ENCODE measurements at regions of chr5 and their contacts with region 1.

Region 1: DNA sequence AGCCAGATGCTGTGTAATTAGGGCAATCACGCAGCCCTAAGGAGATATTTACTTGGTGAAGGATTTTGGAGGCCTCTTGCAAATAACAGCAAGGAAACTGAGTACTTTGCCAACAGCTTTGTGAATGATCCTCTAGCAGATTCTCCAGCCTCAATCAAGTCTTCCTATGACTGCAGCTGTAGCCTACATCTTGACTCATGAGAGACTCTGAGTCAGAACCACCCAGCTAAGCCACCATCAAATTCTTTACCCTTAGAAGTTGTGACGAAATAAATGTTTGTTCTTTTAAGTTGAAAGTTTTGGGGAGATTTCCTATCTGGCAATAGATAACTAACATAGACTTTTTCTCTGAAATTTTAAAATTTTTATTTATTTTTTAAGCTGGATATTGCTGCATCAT is 237.6 kb upstream of the CCNH start:
- DNase-seq: no peak
- H3K4me3 ChIP-seq: no peak overlapping the region
- H3K27ac ChIP-seq: peak overlapping the region in 2 of 59 donors; percentile 20 to 29
- H3K27me3 ChIP-seq: no peaks in the 10 kb centered on the region
- CTCF ChIP-seq: no peak

Region 2: GRCh38 chr5:86493777-86494176 is 1156.5 kb before region 1 on chr5:
- intact Hi-C with region 1: no loop called
- DNase-seq: no peak
- H3K4me3 ChIP-seq: no peak overlapping the region
- H3K27ac ChIP-seq: no peak overlapping the region
- H3K27me3 ChIP-seq: peaks cover 0 to 3% (median 0%) of the 10 kb centered on the region in 45 donors
- CTCF ChIP-seq: no peak

Region 3: GRCh38 chr5:87746891-87747377 is 96.7 kb after region 1 on chr5:
- intact Hi-C with region 1: loop called in 1 of 2 experiments (anchors 5 kb)
- DNase-seq: no peak
- H3K4me3 ChIP-seq: no peak overlapping the region
- H3K27ac ChIP-seq: no peak overlapping the region
- H3K27me3 ChIP-seq: peaks cover 0 to 2% (median 0%) of the 10 kb centered on the region in 45 donors
- CTCF ChIP-seq: no peak

Region 4: GRCh38 chr5:87829217-87829551 is 178.9 kb after region 1 on chr5:
- intact Hi-C with region 1: no loop called
- DNase-seq: peak in 2 of 10 donors; percentile 9 to 12
- H3K4me3 ChIP-seq: no peak overlapping the region
- H3K27ac ChIP-seq: no peak overlapping the region
- H3K27me3 ChIP-seq: no peaks in the 10 kb centered on the region
- CTCF ChIP-seq: no peak